Psoas muscle (tissue), 8 donors: ENCODE measurements at regions of chr15 and their contacts with region 1.

Region 1: DNA sequence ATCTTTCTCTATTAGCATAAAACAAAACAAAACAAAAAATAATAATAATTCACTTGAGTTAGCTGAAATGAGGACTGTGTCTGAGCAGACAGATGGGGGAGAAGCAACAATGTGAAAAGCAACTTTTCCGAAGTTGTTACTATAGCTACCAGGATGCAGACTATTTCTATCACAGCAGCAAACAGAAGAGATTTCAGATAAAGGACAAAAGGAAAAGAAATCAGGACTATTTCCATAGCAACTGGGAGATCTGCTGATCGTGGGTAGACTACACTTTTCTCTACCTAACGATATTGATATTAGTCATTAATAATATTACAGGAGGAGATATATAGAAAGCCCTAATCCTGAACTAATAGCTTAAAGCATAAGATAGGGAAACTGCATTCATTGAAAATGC is 321.7 kb downstream of the GABRG3 start:
- DNase-seq: no peak
- ATAC-seq: no peak
- H3K4me3 ChIP-seq: no peak overlapping the region
- H3K27ac ChIP-seq: no peak overlapping the region
- H3K4me1 ChIP-seq: no peaks in the 10 kb centered on the region
- H3K27me3 ChIP-seq: no peaks in the 10 kb centered on the region
- CTCF ChIP-seq: no peak

Region 2: GRCh38 chr15:26943866-26944265 is 348.8 kb before region 1 on chr15:
- intact Hi-C with region 1: no loop called
- DNase-seq: no peak
- ATAC-seq: no peak
- H3K4me3 ChIP-seq: no peak overlapping the region
- H3K27ac ChIP-seq: no peak overlapping the region
- H3K4me1 ChIP-seq: no peaks in the 10 kb centered on the region
- H3K27me3 ChIP-seq: no peaks in the 10 kb centered on the region
- CTCF ChIP-seq: no peak

Region 3: GRCh38 chr15:27353856-27354255 is 61.2 kb after region 1 on chr15:
- intact Hi-C with region 1: loop called in 1 of 2 experiments (anchors 5 kb)
- DNase-seq: no peak
- ATAC-seq: no peak
- H3K4me3 ChIP-seq: no peak overlapping the region
- H3K27ac ChIP-seq: no peak overlapping the region
- H3K4me1 ChIP-seq: no peaks in the 10 kb centered on the region
- H3K27me3 ChIP-seq: no peaks in the 10 kb centered on the region
- CTCF ChIP-seq: no peak